Gastrocnemius medialis (tissue), 4 donors: ENCODE measurements at regions of chr10 and their contacts with region 1.

Region 1: DNA sequence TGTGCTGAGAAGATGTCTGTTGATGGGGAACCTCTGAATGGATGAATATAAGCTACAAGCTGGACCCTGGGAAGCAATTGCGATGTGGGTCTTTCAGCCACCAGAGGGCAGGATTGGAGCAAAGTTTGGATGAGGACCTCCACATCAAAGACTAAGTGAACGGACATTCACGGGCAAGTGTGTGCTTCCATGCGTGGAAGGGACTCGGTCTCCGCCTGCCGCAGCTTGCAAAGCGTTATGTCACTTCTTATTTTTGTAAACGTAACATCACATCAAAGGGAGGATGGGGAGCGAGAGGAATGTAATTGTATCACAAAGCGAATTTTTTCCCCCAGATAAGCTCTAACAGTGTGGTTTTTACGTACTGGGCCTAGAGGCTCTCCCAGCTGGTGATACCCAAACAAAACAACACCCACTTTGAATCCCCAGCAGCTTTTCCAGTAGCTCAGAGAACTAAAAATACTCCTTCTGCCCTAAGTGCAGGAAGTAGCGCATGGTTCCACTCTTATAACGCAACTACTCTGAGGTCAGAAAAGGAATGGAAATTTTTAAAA is 65.0 kb downstream of the VWA2 start:
- DNase-seq: peak; percentile 41 to 68
- ATAC-seq: peak; percentile 87 to 94
- H3K4me3 ChIP-seq: peak overlapping the region; percentile 14 to 47 (median 40)
- H3K27ac ChIP-seq: peak overlapping the region in 2 of 4 donors; percentile 2 to 40
- H3K4me1 ChIP-seq: peaks cover 8 to 13% of the 10 kb centered on the region in 2 donors
- H3K27me3 ChIP-seq: no peaks in the 10 kb centered on the region
- CTCF ChIP-seq: peak; percentile 59 to 77 (median 72)
- POLR2A ChIP-seq: no peak

Region 2: GRCh38 chr10:114403541-114404161 is 99.6 kb after region 1 on chr10:
- in situ Hi-C with region 1: no loop called
- intact Hi-C with region 1: loop called (anchors 10 kb)
- DNase-seq: no peak
- ATAC-seq: no peak
- H3K4me3 ChIP-seq: peak overlapping the region; percentile 55 to 64 (median 60)
- H3K27ac ChIP-seq: peak overlapping the region; percentile 41 to 63 (median 50)
- H3K4me1 ChIP-seq: peaks cover 19 to 22% of the 10 kb centered on the region in 2 donors
- H3K27me3 ChIP-seq: peaks cover 36 to 39% (median 38%) of the 10 kb centered on the region in 3 donors
- CTCF ChIP-seq: peak in 2 of 5 experiments; percentile 12 to 16
- POLR2A ChIP-seq: no peak

Region 3: DNA sequence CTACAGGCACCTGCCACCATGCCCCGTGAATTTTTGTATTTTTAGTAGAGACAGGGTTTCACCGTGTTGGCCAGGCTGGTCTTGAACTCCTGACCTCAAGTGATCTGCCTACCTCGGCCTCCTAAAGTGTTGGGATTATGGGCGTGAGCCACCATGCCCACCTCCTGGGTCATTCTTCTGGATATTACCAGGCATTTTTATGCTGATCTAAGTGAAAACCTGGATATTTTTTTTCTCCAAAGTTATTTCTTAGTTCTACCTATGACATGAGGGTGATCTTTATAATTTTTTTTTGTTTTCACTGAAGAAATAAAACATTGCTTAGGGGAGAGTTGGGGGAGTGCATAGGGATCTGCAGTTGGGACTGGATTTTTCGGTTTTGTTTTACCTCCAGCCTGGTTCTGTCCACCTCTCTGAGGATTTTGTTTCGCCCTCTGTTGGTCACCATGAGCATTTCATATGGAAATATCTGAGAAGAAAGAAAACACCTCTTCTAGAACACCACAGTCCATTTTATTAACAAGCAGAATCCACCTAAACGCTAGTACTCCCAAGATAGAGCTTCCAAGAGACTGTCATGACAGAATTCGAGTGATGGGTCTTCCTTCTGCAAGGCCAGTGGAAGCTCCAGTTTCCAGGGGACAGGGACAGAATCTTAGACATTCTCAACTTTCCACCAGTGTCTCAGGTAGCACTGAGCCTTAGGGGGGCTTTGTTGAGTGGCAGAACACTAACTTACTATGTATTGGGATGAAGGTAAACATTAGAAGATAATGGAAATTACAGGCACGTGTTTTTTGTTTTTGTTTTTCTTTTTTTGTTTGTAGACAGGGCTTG is 133.6 kb after region 1 on chr10:
- in situ Hi-C with region 1: loop called in 1 of 4 experiments (anchors 10 kb)
- intact Hi-C with region 1: loop called (anchors 1 kb)
- DNase-seq: no peak
- ATAC-seq: no peak
- H3K4me3 ChIP-seq: no peak overlapping the region
- H3K27ac ChIP-seq: no peak overlapping the region
- H3K4me1 ChIP-seq: no peaks in the 10 kb centered on the region
- H3K27me3 ChIP-seq: no peaks in the 10 kb centered on the region
- CTCF ChIP-seq: peak in 2 of 5 experiments; percentile 17
- POLR2A ChIP-seq: no peak

Region 4: GRCh38 chr10:114779803-114780609 is 475.9 kb after region 1 on chr10:
- in situ Hi-C with region 1: loop called in 2 of 4 experiments (anchors 10 to 25 kb)
- intact Hi-C with region 1: no loop called
- DNase-seq: no peak
- ATAC-seq: peak in 1 of 2 donors; percentile 33
- H3K4me3 ChIP-seq: no peak overlapping the region
- H3K27ac ChIP-seq: peak overlapping the region in 3 of 4 donors; percentile 24 to 46 (median 39)
- H3K4me1 ChIP-seq: no peaks in the 10 kb centered on the region
- H3K27me3 ChIP-seq: no peaks in the 10 kb centered on the region
- CTCF ChIP-seq: no peak
- POLR2A ChIP-seq: peak in 1 of 2 donors; percentile 19

Region 5: DNA sequence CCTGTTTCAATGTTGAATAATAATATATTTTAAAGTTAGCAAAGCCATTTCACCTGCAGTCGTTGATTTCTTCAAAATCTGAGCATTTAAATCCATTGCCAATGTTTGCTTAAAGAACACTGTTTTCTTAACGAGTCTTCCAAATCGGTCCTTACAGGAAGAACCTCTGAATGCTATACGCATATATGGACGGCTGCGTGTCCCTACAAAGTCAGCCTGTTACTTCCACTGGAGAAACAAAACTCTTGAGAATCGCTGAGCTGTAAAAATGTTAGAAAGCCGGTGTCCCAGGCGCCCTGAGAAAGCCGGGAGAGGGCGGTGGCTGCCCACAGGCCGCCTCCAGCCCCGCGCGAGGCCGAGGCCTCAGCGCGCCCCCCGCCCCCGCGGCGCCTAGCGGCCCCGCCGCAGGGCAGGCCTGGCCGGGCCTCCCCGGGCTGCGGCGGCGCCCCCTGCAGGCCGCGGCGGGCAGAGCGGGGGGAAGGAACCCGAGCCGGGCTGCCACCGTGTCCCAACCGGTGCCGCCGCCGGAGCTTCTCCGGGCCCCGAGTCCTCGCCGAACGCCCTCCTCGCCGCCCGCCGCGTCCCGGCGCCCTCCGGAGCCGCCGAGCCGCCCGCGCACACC is 517.3 kb after region 1 on chr10 and contains the start of gene FHIP2A:
- in situ Hi-C with region 1: loop called in 1 of 4 experiments (anchors 25 kb)
- intact Hi-C with region 1: no loop called
- DNase-seq: peak; percentile 40 to 76
- ATAC-seq: peak; percentile 65 to 73
- H3K4me3 ChIP-seq: peak within 1 kb of the TSS; percentile 77 to 89 (median 86)
- H3K27ac ChIP-seq: peak within 1 kb of the TSS; percentile 96 to 98 (median 96)
- H3K4me1 ChIP-seq: peaks cover 23 to 27% of the 10 kb centered on the region in 2 donors
- H3K27me3 ChIP-seq: no peaks in the 10 kb centered on the region
- CTCF ChIP-seq: peak in 4 of 5 experiments; percentile 82 to 91 (median 90)
- POLR2A ChIP-seq: peak; percentile 80 to 82
- total RNA-seq, gene FHIP2A: 22.2 to 35.7 (median 30.1) TPM

Region 6: GRCh38 chr10:115129752-115130151 is 825.7 kb after region 1 on chr10:
- in situ Hi-C with region 1: loop called in 1 of 4 experiments (anchors 25 kb)
- intact Hi-C with region 1: no loop called
- DNase-seq: no peak
- ATAC-seq: peak in 1 of 2 donors; percentile 44
- H3K4me3 ChIP-seq: no peak overlapping the region
- H3K27ac ChIP-seq: no peak overlapping the region
- H3K4me1 ChIP-seq: no peaks in the 10 kb centered on the region
- H3K27me3 ChIP-seq: no peaks in the 10 kb centered on the region
- CTCF ChIP-seq: peak; percentile 19 to 42 (median 40)
- POLR2A ChIP-seq: no peak